Right ventricle myocardium inferior (tissue), 1 donor: ENCODE measurements at regions of chr16 and their contacts with region 1.

Region 1: DNA sequence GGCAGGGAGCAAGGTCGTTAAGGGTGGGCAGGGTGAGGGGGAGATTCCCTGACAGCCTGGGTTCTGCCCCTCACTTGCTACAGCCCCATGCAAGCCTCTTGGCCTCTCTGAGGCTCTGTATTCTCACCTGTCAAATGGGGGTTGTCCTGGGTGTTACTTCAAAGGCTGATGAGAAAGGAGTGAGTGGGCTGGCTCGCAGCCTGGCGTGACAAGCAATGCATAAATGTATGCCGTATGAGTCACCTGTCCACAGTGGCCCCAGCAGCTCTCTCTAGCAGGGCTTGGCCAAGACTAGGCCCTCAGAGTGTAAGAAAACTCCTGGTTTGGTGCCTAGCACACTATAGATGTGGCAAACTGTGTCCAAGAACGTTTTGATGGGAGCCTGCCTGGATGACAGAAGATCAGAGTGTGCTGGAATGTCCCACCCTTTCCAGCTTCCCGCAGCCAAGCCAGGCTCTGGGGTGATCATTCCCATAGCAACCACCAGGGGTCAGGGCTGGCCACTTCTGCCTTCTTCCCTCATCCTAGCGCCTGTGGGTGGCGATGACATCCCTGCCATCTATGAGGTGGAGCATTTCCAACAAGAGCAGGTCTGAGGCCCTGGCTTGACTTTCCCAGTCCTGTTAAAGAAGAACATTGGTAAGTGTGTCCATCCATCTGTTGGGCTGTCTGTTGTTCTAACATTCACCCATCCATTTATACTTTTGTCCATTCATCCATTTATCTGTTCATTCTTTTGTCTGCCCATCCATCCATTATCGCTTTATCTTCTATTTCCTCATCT is 37.2 kb upstream of the ADGRG1 start:
- DNase-seq: peak; percentile 87
- ATAC-seq: peak; percentile 90

Region 2: DNA sequence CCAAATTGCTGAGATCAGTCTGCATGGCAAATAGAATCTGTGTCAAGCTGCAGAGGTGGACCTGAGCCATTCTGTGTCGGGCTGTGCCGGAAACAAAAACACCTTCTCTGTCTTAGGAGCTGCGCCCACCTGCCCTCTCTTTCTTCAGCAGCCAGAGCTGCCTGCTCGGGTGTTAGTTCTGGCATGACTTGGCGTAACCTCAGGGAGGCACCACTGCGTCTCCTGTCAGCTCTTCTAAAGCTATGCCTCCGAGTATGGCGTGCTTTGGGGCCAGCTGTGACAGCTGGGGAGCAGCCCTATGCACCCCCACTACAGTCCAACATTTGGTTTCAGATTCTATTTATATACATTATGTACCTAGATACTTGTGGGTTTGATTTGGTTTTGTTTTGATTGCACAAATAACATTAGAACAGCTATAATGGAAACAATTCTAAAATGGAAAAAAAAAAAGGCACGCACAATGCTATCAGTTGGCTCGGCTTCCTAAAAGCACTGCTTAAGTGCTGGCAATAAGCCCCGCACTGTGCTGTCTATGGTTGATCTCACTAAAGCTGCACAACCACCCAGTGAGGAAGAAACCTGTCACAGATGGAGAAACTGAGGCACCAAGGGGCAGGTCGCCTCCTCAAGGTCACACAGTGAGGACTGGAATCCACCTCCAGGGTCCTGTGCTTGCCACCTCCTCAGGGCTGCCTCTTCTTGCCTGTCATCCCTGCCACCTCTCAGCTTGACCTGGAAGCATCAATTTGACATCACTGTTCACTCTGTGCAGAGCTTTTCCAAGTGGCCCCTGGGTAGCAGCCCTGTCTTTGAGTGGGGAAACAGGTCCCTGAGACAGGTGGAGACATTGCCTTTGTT is 18.5 kb after region 1 on chr16:
- intact Hi-C with region 1: no loop called
- DNase-seq: no peak
- ATAC-seq: peak; percentile 75

Region 3: GRCh38 chr16:57720142-57720575 is 128.9 kb after region 1 on chr16:
- intact Hi-C with region 1: loop called (anchors 2 kb)
- DNase-seq: no peak
- ATAC-seq: peak; percentile 46